Esophagus muscularis mucosa (tissue), 4 donors: ENCODE measurements at regions of chr1 and their contacts with region 1.

Region 1: DNA sequence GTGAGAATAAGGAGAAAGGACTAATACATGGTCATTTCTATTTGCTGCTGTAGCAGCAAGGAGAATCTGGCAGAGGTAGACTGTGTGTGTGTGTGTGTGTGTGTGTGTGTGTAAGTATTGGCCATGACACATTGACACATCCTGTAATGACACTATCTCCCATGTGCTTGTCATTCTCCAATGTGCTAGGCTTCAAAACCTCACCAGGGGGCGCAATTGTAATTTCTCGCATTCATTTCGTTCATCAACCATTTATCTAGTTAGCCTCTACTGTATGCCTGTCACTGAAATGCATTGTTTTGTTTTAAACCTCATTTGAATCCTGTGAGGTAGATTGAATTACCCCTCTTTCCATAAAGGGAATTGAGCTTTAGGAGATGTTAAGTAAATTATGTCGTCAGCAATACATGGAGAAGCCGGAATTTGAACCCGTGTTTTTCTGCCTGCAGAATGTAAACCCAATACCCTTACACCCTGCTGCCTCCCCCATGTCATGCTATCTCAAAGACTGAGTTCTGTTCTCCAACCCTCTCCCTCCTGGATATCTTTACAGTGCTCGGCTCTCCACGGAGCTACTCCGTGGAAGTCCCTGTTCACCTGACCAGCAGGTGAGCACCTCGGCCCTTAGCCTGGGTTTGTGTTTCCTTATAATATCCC is 100.8 kb downstream of the UCK2 start:
- DNase-seq: no peak
- H3K4me3 ChIP-seq: no peak overlapping the region
- H3K27ac ChIP-seq: no peak overlapping the region
- H3K4me1 ChIP-seq: no peaks in the 10 kb centered on the region
- H3K27me3 ChIP-seq: peaks cover 0 to 10% (median 0%) of the 10 kb centered on the region in 4 donors
- CTCF ChIP-seq: peak; percentile 46 to 60 (median 51)
- EP300 ChIP-seq: no peak
- POLR2A ChIP-seq: no peak

Region 2: DNA sequence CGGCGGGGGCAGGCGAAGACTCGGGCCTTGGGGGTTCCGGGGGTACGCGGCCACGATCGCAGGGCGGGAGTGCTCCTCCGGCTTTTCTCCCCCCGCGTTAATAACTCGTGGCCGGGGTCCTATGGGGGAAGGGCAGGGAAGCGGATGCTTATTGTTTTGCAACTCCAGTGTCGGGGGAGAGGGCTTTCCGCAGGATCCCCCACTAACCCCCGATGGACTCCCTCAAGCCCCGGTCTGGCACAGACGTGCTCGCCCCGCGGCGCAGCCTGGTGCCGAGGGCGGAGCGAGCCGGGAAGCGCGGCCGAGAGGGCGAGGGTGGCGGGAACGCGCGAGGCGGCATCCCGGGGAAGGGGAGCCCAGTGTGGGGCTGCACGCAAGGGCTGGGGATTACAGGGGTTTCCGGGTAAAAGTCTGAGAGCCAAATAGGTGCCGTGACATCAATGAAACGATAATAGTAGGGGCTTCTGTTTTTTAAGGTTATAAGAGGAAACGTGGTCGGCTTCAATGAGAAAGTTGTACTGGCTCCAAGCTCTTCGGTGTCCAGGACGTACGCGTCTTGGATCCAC is 100.0 kb before region 1 on chr1:
- intact Hi-C with region 1: no loop called
- DNase-seq: no peak
- H3K4me3 ChIP-seq: peak overlapping the region; percentile 78 to 93 (median 86)
- H3K27ac ChIP-seq: peak overlapping the region; percentile 88 to 97 (median 90)
- H3K4me1 ChIP-seq: peaks cover 14 to 24% (median 19%) of the 10 kb centered on the region in 4 donors
- H3K27me3 ChIP-seq: no peaks in the 10 kb centered on the region
- CTCF ChIP-seq: no peak
- EP300 ChIP-seq: no peak
- POLR2A ChIP-seq: no peak

Region 3: DNA sequence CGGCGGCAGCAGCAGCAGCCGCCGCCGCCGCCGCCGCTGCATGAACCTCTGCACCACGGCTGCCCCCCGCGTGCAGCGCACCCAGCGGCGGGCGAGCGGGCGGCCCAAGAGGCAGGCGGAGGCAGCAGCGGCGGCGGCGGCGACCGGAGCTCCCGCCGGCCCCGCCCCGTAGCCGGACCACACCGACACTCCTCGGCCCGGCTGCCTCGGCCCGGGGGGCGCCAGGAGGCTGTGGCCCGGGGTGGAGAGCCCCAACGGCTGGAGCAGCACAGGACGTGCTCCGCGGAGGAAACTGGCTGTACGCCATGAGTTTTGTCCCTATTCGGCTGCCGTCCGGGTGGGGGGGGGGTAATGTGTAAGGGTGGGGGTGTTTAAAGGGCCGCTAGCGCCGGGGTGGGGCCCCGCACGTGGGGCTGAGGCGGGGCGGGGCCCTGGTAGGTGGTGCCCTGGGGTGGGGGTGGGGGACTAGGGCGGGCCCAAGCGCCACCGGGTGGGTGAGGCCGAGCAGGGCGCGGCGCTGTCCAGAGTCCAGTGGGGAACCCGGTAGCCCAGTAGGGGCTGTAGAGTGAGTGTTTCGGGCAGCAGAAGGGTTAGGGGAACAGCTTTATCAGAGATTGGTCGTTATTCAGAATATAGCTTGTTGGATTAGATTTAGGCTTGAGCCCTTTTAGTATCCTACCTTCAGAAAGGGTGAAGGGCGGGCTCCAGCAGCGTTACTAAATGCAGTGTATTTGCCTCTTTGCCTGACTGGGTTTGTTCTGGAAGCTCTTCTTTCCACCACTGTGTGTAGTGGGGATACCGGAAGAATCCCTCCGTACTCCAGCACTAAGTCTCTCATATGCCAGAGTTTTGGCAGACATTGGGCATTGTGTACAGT is 238.7 kb after region 1 on chr1 and contains the start of gene FAM78B:
- intact Hi-C with region 1: loop called (anchors 10 kb)
- DNase-seq: peak; percentile 94
- H3K4me3 ChIP-seq: peak within 1 kb of the TSS; percentile 73 to 88 (median 82)
- H3K27ac ChIP-seq: peak within 1 kb of the TSS; percentile 62 to 81 (median 69)
- H3K4me1 ChIP-seq: peaks cover 15 to 34% (median 27%) of the 10 kb centered on the region in 4 donors
- H3K27me3 ChIP-seq: no peaks in the 10 kb centered on the region
- CTCF ChIP-seq: peak in 1 of 3 experiments; percentile 22
- EP300 ChIP-seq: no peak
- POLR2A ChIP-seq: no peak
- total RNA-seq, gene FAM78B: 0.50 to 2.0 (median 1.3) TPM

Region 4: DNA sequence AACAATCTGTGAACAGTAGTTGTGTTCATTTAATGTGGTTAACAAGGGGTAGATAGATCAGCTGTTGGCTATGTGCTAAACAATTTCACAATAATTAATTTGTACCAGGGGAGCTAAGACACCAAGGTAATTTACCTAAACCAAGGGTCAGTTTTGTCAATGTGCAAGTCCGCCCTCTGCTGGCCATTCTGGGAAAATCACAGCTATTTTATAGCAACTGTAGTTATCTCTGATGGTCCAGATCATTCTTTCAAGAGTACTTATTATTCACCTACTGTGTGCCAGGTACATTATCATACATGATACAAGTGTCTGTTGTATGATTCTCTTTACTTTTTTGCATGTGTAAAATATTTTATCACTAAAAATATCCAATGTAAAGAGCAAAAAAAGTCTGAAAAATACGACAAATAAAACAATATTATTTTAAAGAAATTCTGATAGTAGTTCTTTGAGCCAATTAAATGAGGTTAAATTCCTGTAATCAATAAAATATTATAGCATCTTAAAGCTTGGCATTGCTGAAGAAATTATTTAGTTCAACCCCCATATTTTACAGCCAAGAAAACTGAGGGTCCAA is 550.9 kb after region 1 on chr1:
- intact Hi-C with region 1: loop called (anchors 2 kb)
- DNase-seq: no peak
- H3K4me3 ChIP-seq: no peak overlapping the region
- H3K27ac ChIP-seq: no peak overlapping the region
- H3K4me1 ChIP-seq: no peaks in the 10 kb centered on the region
- H3K27me3 ChIP-seq: peaks cover 0 to 1% (median 0%) of the 10 kb centered on the region in 4 donors
- CTCF ChIP-seq: peak; percentile 58 to 79 (median 76)
- EP300 ChIP-seq: no peak
- POLR2A ChIP-seq: no peak